ENCODE measurements at regions of chr6 and their contacts with region 1.

Region 1: GRCh38 chr6:27495386-27496135 is 22.7 kb upstream of the ZNF184 start:
- DNase-seq: peak; percentile 65
- H3K4me3 Mint-ChIP-seq: peak overlapping the region; percentile 64
- H3K27ac Mint-ChIP-seq: peak overlapping the region; percentile 2
- H3K4me1 Mint-ChIP-seq: peaks cover 17% of the 10 kb centered on the region
- H3K27me3 Mint-ChIP-seq: peaks cover 56% of the 10 kb centered on the region

Region 2: GRCh38 chr6:27479319-27480182 is 16.0 kb before region 1 on chr6:
- CTCF ChIA-PET with region 1: interaction called, 3 read pairs
- POLR2A ChIA-PET with region 1: interaction called, 10 read pairs
- DNase-seq: peak; percentile 86
- H3K4me3 Mint-ChIP-seq: no peak overlapping the region
- H3K27ac Mint-ChIP-seq: no peak overlapping the region
- H3K4me1 Mint-ChIP-seq: peaks cover 10% of the 10 kb centered on the region
- H3K27me3 Mint-ChIP-seq: peaks cover 4% of the 10 kb centered on the region

Measured in activated CD4-positive, alpha-beta memory T cell treated with anti-CD3 and anti-CD28 coated beads, Interleukin-2, amount 10 ng/mL, durations not matched to agents 7 days and 5 days (primary cell).